Mammary epithelial cell (primary cell): ENCODE measurements at regions of chrX and their contacts with region 1.

Region 1: GRCh38 chrX:13750204-13750603 is 15.7 kb downstream of the OFD1 start:
- DNase-seq: peak; percentile 60
- H3K4me3 ChIP-seq: no peak overlapping the region
- H3K27ac ChIP-seq: no peak overlapping the region
- H3K4me1 ChIP-seq: peaks cover 15% of the 10 kb centered on the region
- H3K27me3 ChIP-seq: no peaks in the 10 kb centered on the region
- CTCF ChIP-seq: peak; percentile 75 to 78

Region 2: DNA sequence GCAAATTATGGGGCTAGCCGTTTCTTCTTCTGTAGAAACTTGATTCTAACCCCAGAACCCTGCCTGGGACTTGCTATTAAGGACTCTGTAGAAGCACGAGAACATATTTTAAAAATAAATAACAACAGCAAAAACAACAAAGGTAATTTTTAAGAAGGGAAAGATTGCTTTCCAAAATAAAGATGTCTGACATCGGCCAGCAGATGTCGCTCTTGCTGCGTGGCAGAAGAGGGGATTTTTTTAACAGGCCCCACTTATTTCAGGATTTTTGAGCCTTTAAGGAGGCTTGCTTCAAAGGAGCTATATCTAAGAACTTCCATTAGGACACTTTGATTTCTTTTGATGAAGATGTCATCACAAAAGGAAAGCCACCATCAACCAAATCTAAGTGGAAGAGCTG is 243.6 kb before region 1 on chrX:
- CTCF ChIA-PET with region 1: no interaction called
- dilution Hi-C with region 1: no loop called
- in situ Hi-C with region 1: loop called (anchors 10 kb)
- intact Hi-C with region 1: loop called (anchors 1 kb)
- DNase-seq: peak; percentile 18
- H3K4me3 ChIP-seq: no peak overlapping the region
- H3K27ac ChIP-seq: no peak overlapping the region
- H3K4me1 ChIP-seq: no peaks in the 10 kb centered on the region
- H3K27me3 ChIP-seq: no peaks in the 10 kb centered on the region
- CTCF ChIP-seq: peak; percentile 82 to 83

Region 3: GRCh38 chrX:13520936-13521335 is 229.3 kb before region 1 on chrX:
- CTCF ChIA-PET with region 1: no interaction called
- dilution Hi-C with region 1: no loop called
- in situ Hi-C with region 1: loop called in 1 of 2 experiments (anchors 10 kb)
- intact Hi-C with region 1: loop called (anchors 5 kb)
- DNase-seq: no peak
- H3K4me3 ChIP-seq: no peak overlapping the region
- H3K27ac ChIP-seq: no peak overlapping the region
- H3K4me1 ChIP-seq: no peaks in the 10 kb centered on the region
- H3K27me3 ChIP-seq: no peaks in the 10 kb centered on the region
- CTCF ChIP-seq: no peak

Region 4: DNA sequence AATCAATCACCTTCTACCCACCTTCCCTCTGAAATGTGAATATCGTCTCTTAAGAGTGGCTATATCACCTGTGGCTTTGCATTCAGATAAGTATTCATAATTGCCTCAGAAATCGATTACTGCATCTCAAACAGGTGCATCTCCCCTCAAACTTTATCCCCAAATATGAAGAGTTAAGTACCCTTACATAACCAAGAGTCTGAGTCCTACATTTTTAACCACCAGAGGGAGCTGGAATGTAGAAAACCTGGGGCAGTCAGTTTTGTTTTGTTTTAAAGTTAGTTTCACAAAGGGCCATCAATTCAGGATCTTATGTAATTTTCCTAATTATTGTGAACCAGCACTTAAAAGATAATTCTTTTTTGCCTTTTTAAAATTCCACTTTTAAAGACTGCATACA is 91.6 kb before region 1 on chrX:
- CTCF ChIA-PET with region 1: interaction called, 11 read pairs
- dilution Hi-C with region 1: no loop called
- in situ Hi-C with region 1: loop called (anchors 5 kb)
- intact Hi-C with region 1: loop called (anchors 1 kb)
- DNase-seq: peak; percentile 51
- H3K4me3 ChIP-seq: no peak overlapping the region
- H3K27ac ChIP-seq: peak overlapping the region; percentile 76
- H3K4me1 ChIP-seq: peaks cover 16% of the 10 kb centered on the region
- H3K27me3 ChIP-seq: no peaks in the 10 kb centered on the region
- CTCF ChIP-seq: peak; percentile 74 to 75

Region 5: DNA sequence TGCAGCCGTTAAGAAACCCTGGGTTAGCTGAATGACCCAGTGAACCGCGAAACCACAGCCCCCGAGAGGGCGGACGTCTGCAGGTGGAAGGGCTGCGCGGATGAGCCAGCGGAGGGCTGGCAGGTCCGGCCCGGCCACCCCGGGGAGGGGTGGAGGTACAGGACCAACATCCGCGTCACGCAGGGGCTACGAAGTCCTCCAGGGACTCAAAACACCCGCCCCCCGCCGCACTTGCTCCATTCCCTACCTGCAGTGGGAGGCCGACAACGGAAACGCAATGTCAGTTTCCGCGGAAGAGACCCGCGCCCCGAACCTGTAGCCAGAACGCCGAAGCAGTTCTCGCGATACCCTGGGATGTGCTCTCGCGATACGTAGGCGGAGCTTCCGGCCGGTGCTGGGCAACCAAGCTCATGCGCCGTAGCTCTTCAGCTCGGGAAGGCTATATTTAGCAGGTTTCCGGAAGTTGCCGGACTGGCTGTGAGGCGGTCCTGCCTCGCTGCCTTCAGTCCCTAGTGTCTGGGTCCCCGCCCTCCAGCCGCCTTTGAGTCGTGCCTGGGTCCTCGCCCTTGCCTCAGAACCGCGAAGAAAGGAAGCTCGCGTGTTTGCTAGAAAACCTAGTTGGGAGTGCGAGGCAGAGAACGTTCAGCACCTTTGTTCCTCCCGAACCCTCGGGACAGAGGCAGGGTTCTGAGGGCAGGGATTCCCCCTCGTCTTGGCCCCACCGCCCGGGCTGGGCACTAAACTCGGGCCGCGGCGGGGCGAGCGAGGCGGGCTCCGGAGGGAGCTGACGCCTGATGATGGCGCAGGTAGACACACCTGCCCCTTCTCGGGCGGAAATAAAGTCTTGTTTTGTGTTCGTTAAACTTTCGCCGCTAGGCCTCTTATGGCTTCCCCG is 15.7 kb before region 1 on chrX and contains the starts of genes OFD1 and TRAPPC2:
- CTCF ChIA-PET with region 1: no interaction called
- dilution Hi-C with region 1: no loop called
- in situ Hi-C with region 1: no loop called
- intact Hi-C with region 1: no loop called
- DNase-seq: peak; percentile 97
- H3K4me3 ChIP-seq: peak within 1 kb of the TSS; percentile 78 to 95 (median 92)
- H3K27ac ChIP-seq: peak within 1 kb of the TSS; percentile 92
- H3K4me1 ChIP-seq: peaks cover 13% of the 10 kb centered on the region
- H3K27me3 ChIP-seq: no peaks in the 10 kb centered on the region
- CTCF ChIP-seq: peak in 1 of 2 donors; percentile 8
- total RNA-seq, gene OFD1: 39.3 to 42.0 TPM
- total RNA-seq, gene TRAPPC2: 25.3 to 31.2 TPM

Region 6: DNA sequence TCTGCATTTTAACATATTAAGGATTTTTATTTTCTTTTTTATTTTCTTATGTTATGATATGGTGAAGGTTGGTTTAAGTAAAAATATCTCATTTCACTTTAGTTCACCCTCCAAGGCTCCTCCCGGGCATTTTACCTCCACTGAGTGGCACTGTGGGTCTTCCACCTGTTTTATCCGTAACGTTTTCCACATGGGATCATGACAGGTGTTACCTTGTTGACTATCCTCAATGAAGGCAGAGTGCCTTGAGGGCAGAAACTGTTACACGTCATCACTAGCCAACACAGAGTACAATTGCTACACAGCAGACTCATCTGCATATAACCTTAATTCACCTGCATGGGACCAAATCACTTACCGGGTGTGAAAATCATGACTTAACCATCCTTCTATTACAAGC is 173.6 kb after region 1 on chrX:
- CTCF ChIA-PET with region 1: no interaction called
- dilution Hi-C with region 1: no loop called
- in situ Hi-C with region 1: no loop called
- intact Hi-C with region 1: loop called (anchors 2 kb)
- DNase-seq: peak; percentile 78
- H3K4me3 ChIP-seq: no peak overlapping the region
- H3K27ac ChIP-seq: no peak overlapping the region
- H3K4me1 ChIP-seq: no peaks in the 10 kb centered on the region
- H3K27me3 ChIP-seq: no peaks in the 10 kb centered on the region
- CTCF ChIP-seq: peak in 1 of 2 donors; percentile 60

Region 7: DNA sequence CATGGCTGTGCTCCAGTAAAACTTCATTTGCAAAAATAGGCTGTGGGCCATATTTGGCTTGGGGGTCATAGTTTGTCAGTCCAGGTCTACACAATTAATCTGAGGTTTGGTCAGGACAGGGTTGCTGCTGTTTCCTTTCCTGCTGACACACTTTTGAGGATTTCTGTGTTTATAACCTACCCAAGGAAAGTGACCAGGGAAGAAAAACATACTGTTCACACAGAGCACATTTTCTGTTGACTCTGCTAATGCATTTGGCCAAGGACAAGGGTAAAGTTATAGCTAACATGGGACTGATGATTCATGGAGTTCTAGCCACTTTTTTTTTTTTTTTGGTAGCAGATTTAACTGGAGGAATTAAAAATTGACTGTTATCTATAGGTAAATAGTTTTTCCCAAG is 323.4 kb after region 1 on chrX:
- CTCF ChIA-PET with region 1: no interaction called
- dilution Hi-C with region 1: no loop called
- in situ Hi-C with region 1: no loop called
- intact Hi-C with region 1: no loop called
- DNase-seq: no peak
- H3K4me3 ChIP-seq: no peak overlapping the region
- H3K27ac ChIP-seq: no peak overlapping the region
- H3K4me1 ChIP-seq: no peaks in the 10 kb centered on the region
- H3K27me3 ChIP-seq: no peaks in the 10 kb centered on the region
- CTCF ChIP-seq: no peak